Activated B cell treated with CpG ODN at 0.5 μM for 24 hours (primary cell): ENCODE measurements at regions of chr20 and their contacts with region 1.

Region 1: DNA sequence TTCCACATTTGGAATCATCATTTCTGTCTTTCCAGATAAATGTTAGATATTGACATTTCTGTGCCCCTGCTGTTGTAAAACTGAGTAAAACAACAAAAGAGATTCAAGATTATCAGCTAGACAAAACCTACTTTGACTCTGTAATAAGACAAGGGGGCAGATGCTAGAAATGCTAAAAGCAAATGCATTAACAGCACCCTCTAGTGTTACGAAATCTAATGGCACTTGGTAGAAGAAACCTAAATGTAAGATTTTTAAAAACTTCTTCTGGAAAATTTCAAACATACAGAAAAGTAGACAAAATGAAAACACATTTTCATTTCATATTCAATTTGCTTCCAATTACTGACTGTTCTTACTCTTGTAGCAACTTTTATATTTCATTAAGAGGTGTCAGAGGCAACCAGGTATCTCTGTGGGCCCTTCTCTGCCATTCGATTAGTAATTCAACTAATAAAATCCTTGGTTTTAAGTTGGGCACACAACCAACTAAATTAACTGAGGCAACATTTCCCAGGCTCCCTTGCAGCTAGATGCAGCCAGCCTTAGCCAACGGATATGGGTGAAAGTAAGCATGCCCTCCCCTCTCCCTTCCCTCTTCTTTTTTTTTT is 45.0 kb downstream of the SLC23A2 start:
- DNase-seq: no peak
- ATAC-seq: no peak
- H3K4me3 Mint-ChIP-seq: no peak overlapping the region
- H3K27ac Mint-ChIP-seq: peak overlapping the region; percentile 18
- H3K4me1 Mint-ChIP-seq: peaks cover 34% of the 10 kb centered on the region
- H3K27me3 Mint-ChIP-seq: no peaks in the 10 kb centered on the region
- CTCF ChIP-seq: peak; percentile 19

Region 2: GRCh38 chr20:4844751-4845465 is 111.4 kb before region 1 on chr20:
- CTCF ChIA-PET with region 1: no interaction called
- POLR2A ChIA-PET with region 1: no interaction called
- intact Hi-C with region 1: no loop called
- DNase-seq: no peak
- ATAC-seq: peak; percentile 86
- H3K4me3 Mint-ChIP-seq: peak overlapping the region; percentile 50
- H3K27ac Mint-ChIP-seq: peak overlapping the region; percentile 79
- H3K4me1 Mint-ChIP-seq: peaks cover 40% of the 10 kb centered on the region
- H3K27me3 Mint-ChIP-seq: no peaks in the 10 kb centered on the region
- CTCF ChIP-seq: no peak

Region 3: DNA sequence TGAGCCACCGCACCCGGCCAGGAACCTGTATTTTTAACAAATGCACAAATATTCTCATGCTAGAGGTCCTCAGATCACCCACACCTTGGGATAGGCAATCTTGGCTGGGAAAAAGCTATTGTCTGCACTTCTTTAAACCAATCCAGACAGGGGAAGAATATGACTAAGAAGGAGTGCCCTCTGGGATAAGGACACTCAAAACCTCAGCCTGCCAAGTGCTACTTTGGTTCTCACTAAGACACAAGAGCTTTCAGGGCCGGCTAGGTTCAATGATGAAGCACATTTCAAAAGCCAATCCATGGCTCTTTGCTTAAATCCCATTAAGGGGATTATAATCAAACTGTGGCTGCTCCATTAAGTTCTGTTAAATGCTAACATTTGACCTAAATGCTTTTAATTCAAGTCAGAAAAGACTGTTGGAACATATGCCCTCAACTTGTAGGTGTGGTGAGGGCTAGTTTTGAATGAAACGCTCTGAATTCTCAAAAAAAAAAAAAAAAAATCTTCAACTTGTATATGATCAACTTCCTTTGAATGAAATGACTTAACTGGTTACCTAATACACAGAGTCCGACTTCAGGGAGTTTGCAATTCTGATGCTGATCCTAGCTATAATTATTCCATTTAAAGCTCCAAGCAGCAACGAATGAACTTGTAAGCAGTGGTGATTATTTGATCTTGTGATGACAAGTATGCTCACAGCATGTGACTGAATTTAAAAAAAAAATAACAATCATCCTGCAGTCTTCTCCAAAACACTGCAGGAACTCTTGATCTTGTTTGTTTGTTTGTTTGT is 11.6 kb before region 1 on chr20:
- CTCF ChIA-PET with region 1: interaction called, 13 read pairs
- POLR2A ChIA-PET with region 1: interaction called, 7 read pairs
- intact Hi-C with region 1: loop called (anchors 1 kb)
- DNase-seq: no peak
- ATAC-seq: no peak
- H3K4me3 Mint-ChIP-seq: no peak overlapping the region
- H3K27ac Mint-ChIP-seq: no peak overlapping the region
- H3K4me1 Mint-ChIP-seq: peaks cover 85% of the 10 kb centered on the region
- H3K27me3 Mint-ChIP-seq: no peaks in the 10 kb centered on the region
- CTCF ChIP-seq: no peak

Region 4: DNA sequence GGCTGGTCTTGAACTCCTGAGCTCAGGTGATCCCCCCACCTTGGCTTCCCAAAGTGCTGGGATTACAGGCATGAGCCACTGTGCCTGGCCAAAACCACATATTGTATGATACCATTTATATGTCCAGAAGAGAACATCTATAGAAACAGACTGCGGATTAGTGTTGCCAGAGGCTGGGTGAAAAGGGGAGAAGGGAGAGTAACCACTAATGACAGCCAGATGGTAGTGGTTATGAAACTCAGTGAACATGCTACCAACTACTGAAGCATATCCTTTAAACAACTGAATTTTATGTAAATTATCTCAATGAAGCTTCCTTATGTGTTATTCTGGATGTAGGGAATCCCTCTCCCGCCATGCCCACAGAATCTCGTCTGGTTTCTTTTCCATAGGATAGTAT is 29.4 kb after region 1 on chr20:
- CTCF ChIA-PET with region 1: interaction called, 3 read pairs
- POLR2A ChIA-PET with region 1: interaction called, 7 read pairs
- intact Hi-C with region 1: loop called (anchors 1 kb)
- DNase-seq: no peak
- ATAC-seq: peak; percentile 59
- H3K4me3 Mint-ChIP-seq: peak overlapping the region; percentile 66
- H3K27ac Mint-ChIP-seq: peak overlapping the region; percentile 92
- H3K4me1 Mint-ChIP-seq: peaks cover 92% of the 10 kb centered on the region
- H3K27me3 Mint-ChIP-seq: no peaks in the 10 kb centered on the region
- CTCF ChIP-seq: no peak